IMR-90 (cell line): ENCODE measurements at regions of chr10 and their contacts with region 1.

Region 1: GRCh38 chr10:116490028-116490662 is 55.6 kb upstream of the PNLIP start:
- DNase-seq: peak; percentile 16
- ATAC-seq: peak; percentile 53; the same call in 1 of the 2 replicates
- H3K4me3 ChIP-seq: no peak overlapping the region
- H3K27ac ChIP-seq: no peak overlapping the region
- H3K4me1 ChIP-seq: no peaks in the 10 kb centered on the region
- H3K27me3 ChIP-seq: no peaks in the 10 kb centered on the region
- CTCF ChIP-seq: peak; percentile 59
- POLR2A ChIP-seq: no peak
- RAD21 ChIP-seq: peak; percentile 24; the same call in 1 of the 2 replicates

Region 2: DNA sequence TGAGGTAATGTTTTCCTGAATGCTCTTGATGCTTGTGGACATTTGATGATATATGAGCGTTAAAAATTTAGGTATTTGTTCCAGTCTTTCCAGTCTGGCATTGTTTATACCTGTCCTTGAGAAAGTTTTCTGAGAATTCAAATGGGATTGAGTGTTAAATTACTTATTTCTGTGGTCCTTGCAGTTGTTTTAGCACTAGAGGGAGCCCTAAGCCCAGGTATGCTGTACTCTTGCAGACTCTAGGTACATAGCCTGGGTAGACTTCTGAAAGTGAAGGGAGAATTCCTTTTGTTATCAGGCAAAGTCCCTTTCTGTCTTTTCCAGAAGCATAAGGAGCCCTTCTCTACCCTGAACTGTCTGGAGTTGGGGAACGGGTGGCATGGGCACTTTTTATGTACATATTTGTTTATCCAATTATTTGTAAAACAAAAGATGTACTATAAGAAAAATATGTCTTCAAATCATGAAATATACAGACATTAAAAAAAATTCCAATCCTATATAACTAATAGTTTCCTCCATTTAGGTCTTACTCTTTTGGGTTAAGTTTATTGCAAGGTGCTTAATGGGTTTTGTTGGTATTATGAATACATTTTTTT is 1134.9 kb before region 1 on chr10:
- CTCF ChIA-PET with region 1: no interaction called
- POLR2A ChIA-PET with region 1: no interaction called
- dilution Hi-C with region 1: no loop called
- in situ Hi-C with region 1: no loop called
- intact Hi-C with region 1: loop called (anchors 2 kb)
- DNase-seq: peak; percentile 63
- ATAC-seq: peak; percentile 66
- H3K4me3 ChIP-seq: no peak overlapping the region
- H3K27ac ChIP-seq: no peak overlapping the region
- H3K4me1 ChIP-seq: no peaks in the 10 kb centered on the region
- H3K27me3 ChIP-seq: no peaks in the 10 kb centered on the region
- CTCF ChIP-seq: peak; percentile 79
- POLR2A ChIP-seq: no peak
- RAD21 ChIP-seq: peak; percentile 82

Region 3: GRCh38 chr10:116444527-116445142 is 45.5 kb before region 1 on chr10:
- CTCF ChIA-PET with region 1: no interaction called
- POLR2A ChIA-PET with region 1: no interaction called
- dilution Hi-C with region 1: no loop called
- in situ Hi-C with region 1: no loop called
- intact Hi-C with region 1: loop called (anchors 1 kb)
- DNase-seq: peak; percentile 31
- ATAC-seq: peak; percentile 73
- H3K4me3 ChIP-seq: no peak overlapping the region
- H3K27ac ChIP-seq: no peak overlapping the region
- H3K4me1 ChIP-seq: no peaks in the 10 kb centered on the region
- H3K27me3 ChIP-seq: no peaks in the 10 kb centered on the region
- CTCF ChIP-seq: peak; percentile 67
- POLR2A ChIP-seq: no peak
- RAD21 ChIP-seq: peak; percentile 47